ENCODE measurements at regions of chr5 and their contacts with region 1.

Region 1: GRCh38 chr5:180353048-180353979 is at the start of gene GFPT2:
- DNase-seq: peak; percentile 93
- H3K4me3 ChIP-seq: peak within 1 kb of the TSS; percentile 67 to 89 (median 79)
- H3K27ac ChIP-seq: peak within 1 kb of the TSS; percentile 78 to 88 (median 82)
- H3K4me1 ChIP-seq: peaks cover 18 to 46% (median 40%) of the 10 kb centered on the region in 4 donors
- H3K27me3 ChIP-seq: peaks cover 0 to 16% (median 0%) of the 10 kb centered on the region in 4 donors
- CTCF ChIP-seq: no peak
- EP300 ChIP-seq: no peak
- POLR2A ChIP-seq: peak; percentile 57
- total RNA-seq, gene GFPT2: 30.1 to 114 (median 33.6) TPM

Region 2: GRCh38 chr5:180494060-180494509 is 140.8 kb after region 1 on chr5 and contains the start of gene CNOT6:
- intact Hi-C with region 1: loop called (anchors 10 kb)
- DNase-seq: peak; percentile 97
- H3K4me3 ChIP-seq: peak within 1 kb of the TSS; percentile 95 to 100 (median 99)
- H3K27ac ChIP-seq: peak within 1 kb of the TSS; percentile 94 to 97 (median 96)
- H3K4me1 ChIP-seq: peaks cover 22 to 39% (median 34%) of the 10 kb centered on the region in 4 donors
- H3K27me3 ChIP-seq: no peaks in the 10 kb centered on the region
- CTCF ChIP-seq: no peak
- EP300 ChIP-seq: no peak
- POLR2A ChIP-seq: no peak
- total RNA-seq, gene CNOT6: 17.7 to 26.4 (median 20.5) TPM